A673 (cell line): ENCODE measurements at regions of chr1 and their contacts with region 1.

Region 1: DNA sequence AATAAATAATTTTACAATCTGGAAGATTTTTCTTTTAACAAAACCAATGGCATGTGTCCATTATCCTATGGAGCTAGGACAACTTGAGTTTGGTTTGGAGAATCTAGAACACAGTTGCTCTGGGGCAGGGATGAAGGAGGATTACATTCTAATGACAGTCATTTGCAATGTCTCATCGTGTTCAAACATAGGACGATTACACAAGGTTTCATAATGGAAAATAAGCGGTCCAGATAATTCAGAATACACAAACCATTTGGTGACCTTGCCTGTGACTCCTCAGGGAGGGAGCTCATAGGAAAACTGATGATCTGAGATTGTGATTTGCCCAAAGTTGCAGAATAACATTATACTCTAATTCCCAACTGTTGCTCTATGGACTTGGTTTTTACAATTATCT is 27.6 kb upstream of the RGL1 start:
- DNase-seq: peak; percentile 37
- H3K4me3 ChIP-seq: no peak overlapping the region
- H3K27ac ChIP-seq: peak overlapping the region; percentile 96
- H3K4me1 ChIP-seq: peaks cover 55% of the 10 kb centered on the region
- H3K27me3 ChIP-seq: no peaks in the 10 kb centered on the region
- CTCF ChIP-seq: no peak

Region 2: DNA sequence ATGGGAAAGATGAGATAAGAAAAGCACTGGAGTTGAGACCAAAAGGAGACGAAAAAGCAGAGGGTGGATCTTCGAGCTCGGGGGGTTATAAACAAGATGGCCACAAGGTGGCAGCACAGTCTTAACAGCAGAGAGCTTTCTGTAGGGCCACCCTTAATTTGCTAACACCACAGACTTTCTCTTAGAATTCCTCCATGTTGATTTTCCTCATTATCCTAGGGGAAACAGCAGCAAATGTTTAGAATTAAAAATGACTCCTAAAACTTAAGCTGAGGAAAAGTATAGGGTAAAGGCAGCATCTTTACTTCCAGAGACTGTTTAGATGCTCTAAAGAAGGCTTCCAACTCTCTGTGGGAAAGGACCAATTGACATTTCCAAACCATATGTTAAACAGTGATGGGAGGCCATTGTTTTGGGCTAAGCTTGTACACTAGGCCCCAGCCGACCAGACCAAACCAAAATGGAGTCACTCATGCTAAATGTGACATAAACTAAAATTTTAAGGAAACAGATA is 121.7 kb before region 1 on chr1:
- CTCF ChIA-PET with region 1: interaction called, 4 read pairs
- POLR2A ChIA-PET with region 1: no interaction called
- intact Hi-C with region 1: loop called (anchors 2 kb)
- DNase-seq: peak; percentile 93
- H3K4me3 ChIP-seq: no peak overlapping the region
- H3K27ac ChIP-seq: peak overlapping the region; percentile 50
- H3K4me1 ChIP-seq: peaks cover 42% of the 10 kb centered on the region
- H3K27me3 ChIP-seq: no peaks in the 10 kb centered on the region
- CTCF ChIP-seq: peak; percentile 95

Region 3: DNA sequence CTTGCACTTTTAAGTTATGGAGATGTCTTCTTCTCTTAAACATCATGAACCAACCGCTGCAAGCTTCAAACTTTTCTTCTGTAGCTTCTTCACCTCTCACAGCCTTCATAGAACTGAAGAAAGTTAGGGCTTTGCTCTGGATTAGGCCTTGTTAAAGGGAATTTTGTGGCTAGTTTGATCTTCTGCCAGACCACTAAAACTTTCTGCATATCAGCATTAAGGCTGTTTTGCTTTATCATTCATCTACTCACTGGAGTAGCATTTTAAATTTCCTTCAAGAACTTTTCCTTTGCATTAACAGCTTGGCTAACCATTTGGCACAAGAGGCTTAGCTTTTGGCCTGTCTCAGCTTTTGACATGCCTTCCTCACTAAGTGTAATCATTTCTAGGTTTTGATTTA is 15.5 kb before region 1 on chr1:
- CTCF ChIA-PET with region 1: no interaction called
- POLR2A ChIA-PET with region 1: no interaction called
- intact Hi-C with region 1: no loop called
- DNase-seq: no peak
- H3K4me3 ChIP-seq: no peak overlapping the region
- H3K27ac ChIP-seq: no peak overlapping the region
- H3K4me1 ChIP-seq: peaks cover 7% of the 10 kb centered on the region
- H3K27me3 ChIP-seq: no peaks in the 10 kb centered on the region
- CTCF ChIP-seq: no peak

Region 4: DNA sequence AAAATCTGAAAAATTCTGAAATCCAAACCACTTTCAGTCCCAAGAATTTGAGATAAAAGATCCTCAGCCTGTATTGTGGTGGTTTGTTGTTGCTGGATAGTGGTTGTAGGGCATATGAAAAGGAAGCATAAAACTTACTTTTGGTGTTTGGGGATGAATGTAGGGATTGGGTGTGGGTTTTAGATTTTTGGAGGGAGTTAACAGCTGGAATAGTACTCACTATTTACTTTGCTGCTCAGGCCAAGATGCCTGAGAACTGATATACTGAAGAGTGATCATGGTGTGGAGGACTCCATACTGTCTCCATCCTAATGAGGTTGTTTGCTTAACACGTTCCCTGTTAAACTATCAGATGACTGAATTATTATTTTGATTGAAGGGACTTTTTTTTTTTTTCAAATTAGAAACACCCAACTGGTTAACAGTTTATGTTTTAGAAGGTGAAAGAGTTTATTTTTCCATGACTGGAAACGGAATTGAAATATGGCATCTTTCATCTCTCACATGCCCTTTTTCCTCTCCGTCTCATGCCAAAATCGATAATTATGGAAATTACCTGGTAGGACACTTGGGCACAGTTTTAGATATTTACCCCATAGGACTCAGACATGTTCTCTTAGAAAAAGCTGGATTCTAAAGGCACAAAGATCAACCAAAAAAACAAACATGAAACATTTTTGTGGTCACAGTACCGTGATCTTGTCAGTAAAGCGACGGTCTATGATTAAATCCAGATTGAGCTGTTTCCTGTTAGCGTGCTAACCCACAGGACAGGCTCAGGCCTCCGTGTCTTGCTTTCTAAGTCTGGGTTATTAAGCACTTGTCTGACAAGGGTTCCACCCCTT is 64.8 kb after region 1 on chr1:
- CTCF ChIA-PET with region 1: no interaction called
- POLR2A ChIA-PET with region 1: no interaction called
- intact Hi-C with region 1: loop called (anchors 2 kb)
- DNase-seq: peak; percentile 96
- H3K4me3 ChIP-seq: peak overlapping the region; percentile 29
- H3K27ac ChIP-seq: peak overlapping the region; percentile 97
- H3K4me1 ChIP-seq: peaks cover 67% of the 10 kb centered on the region
- H3K27me3 ChIP-seq: no peaks in the 10 kb centered on the region
- CTCF ChIP-seq: no peak

Region 5: GRCh38 chr1:183915625-183916510 is 138.5 kb after region 1 on chr1:
- CTCF ChIA-PET with region 1: interaction called, 4 read pairs
- POLR2A ChIA-PET with region 1: interaction called, 7 read pairs
- intact Hi-C with region 1: loop called (anchors 1 kb)
- DNase-seq: peak; percentile 97
- H3K4me3 ChIP-seq: peak overlapping the region; percentile 6
- H3K27ac ChIP-seq: peak overlapping the region; percentile 95
- H3K4me1 ChIP-seq: peaks cover 56% of the 10 kb centered on the region
- H3K27me3 ChIP-seq: no peaks in the 10 kb centered on the region
- CTCF ChIP-seq: peak; percentile 90

Region 6: GRCh38 chr1:184152434-184152898 is 375.1 kb after region 1 on chr1:
- CTCF ChIA-PET with region 1: no interaction called
- POLR2A ChIA-PET with region 1: no interaction called
- intact Hi-C with region 1: loop called (anchors 1 kb)
- DNase-seq: peak; percentile 99
- H3K4me3 ChIP-seq: peak overlapping the region; percentile 41
- H3K27ac ChIP-seq: peak overlapping the region; percentile 96
- H3K4me1 ChIP-seq: peaks cover 79% of the 10 kb centered on the region
- H3K27me3 ChIP-seq: no peaks in the 10 kb centered on the region
- CTCF ChIP-seq: no peak

Region 7: DNA sequence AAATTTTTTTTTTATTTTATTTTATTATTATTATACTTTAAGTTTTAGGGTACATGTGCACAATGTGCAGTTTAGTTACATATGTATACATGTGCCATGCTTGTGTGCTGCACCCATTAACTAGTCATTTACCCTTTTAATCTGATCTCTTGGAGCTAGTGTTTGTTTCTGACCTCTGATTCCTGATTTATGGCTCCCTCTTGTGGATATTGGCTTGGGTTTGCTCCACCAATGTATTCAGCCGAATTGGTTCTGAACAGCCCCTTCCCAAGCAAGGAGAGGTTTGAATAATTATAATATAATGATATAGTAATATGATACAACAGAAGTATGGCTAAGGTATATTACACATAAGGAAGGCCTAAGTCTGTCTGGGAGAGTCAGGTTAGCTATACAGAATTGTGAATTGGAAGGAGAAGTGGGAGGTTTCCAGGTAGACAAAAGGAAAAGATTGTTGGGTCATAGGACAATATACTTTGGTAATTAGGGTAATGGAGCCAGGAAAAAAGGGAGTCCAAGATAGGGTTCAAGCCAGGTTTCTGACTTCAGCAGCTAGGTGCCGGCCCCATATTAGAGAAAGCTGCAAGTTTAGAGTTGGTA is 1903.8 kb after region 1 on chr1:
- CTCF ChIA-PET with region 1: interaction called, 3 read pairs
- POLR2A ChIA-PET with region 1: no interaction called
- intact Hi-C with region 1: loop called (anchors 10 kb)
- DNase-seq: peak; percentile 87
- H3K4me3 ChIP-seq: no peak overlapping the region
- H3K27ac ChIP-seq: peak overlapping the region; percentile 54
- H3K4me1 ChIP-seq: peaks cover 68% of the 10 kb centered on the region
- H3K27me3 ChIP-seq: no peaks in the 10 kb centered on the region
- CTCF ChIP-seq: peak; percentile 75